H1 (cell line): ENCODE measurements at regions of chr19 and their contacts with region 1.

Region 1: GRCh38 chr19:44890366-44891015 is 563 bp upstream of the TOMM40 start:
- DNase-seq: peak; percentile 99
- H3K4me3 ChIP-seq: peak overlapping the region; percentile 28 to 58 (median 48); a peak in 7 of 8 replicates
- H3K27ac ChIP-seq: peak overlapping the region; percentile 74; the same call in 1 of the 2 replicates
- H3K4me1 ChIP-seq: peaks cover 5 to 8% (median 7%) of the 10 kb centered on the region in 4 experiments
- H3K27me3 ChIP-seq: no peaks in the 10 kb centered on the region
- CTCF ChIP-seq: no peak
- EP300 ChIP-seq: no peak
- POLR2A ChIP-seq: peak; percentile 83 to 92
- RAD21 ChIP-seq: no peak

Region 2: GRCh38 chr19:44737238-44738071 is 153.0 kb before region 1 on chr19:
- CTCF ChIA-PET with region 1: no interaction called
- POLR2A ChIA-PET with region 1: no interaction called
- DNase-seq: no peak
- H3K4me3 ChIP-seq: no peak overlapping the region
- H3K27ac ChIP-seq: no peak overlapping the region
- H3K4me1 ChIP-seq: peaks cover 0 to 4% (median 2%) of the 10 kb centered on the region in 4 experiments; a peak in 4 of 7 replicates
- H3K27me3 ChIP-seq: peaks cover 0 to 3% (median 0%) of the 10 kb centered on the region in 4 experiments; a peak in 1 of 7 replicates
- CTCF ChIP-seq: no peak
- EP300 ChIP-seq: no peak
- POLR2A ChIP-seq: no peak
- RAD21 ChIP-seq: no peak

Region 3: DNA sequence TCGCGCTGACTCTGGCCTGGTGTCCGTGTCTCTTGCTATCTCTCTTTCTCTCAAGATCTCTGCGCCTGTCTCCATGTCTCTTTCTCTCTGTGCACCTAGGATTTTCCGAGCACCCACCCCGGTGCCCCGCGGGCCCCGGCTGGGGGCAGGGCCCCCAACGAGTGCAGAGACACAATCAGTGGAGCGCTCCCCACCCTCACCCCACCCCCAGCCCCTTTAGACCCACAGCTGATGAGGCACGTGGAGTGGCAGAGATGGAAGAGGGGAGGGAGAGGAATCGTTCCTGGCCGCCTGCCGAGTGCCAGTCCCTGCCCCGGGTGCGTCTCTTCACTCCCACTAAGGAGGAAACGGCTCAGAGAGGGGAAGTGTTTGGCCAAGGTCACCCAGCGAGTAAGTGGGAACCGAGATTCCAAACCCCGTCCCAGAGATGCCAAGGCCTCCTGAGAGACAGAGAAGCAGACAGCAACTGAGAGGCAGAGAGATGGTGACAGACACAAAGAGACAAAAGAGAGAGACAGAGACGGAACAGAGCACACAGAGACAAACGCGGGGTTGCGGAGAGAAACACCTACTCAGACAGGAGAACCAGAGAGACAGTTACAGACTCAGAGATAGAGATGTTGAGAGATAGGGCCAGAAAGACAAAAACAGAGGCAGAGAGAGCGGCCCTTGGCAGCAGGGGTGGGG is 142.6 kb before region 1 on chr19:
- CTCF ChIA-PET with region 1: no interaction called
- POLR2A ChIA-PET with region 1: no interaction called
- DNase-seq: peak in 1 of 2 experiments; percentile 59
- H3K4me3 ChIP-seq: peak overlapping the region; percentile 43 to 65 (median 52)
- H3K27ac ChIP-seq: no peak overlapping the region
- H3K4me1 ChIP-seq: peaks cover 0 to 7% (median 4%) of the 10 kb centered on the region in 4 experiments; a peak in 4 of 7 replicates
- H3K27me3 ChIP-seq: peaks cover 22 to 68% (median 51%) of the 10 kb centered on the region in 4 experiments
- CTCF ChIP-seq: no peak
- EP300 ChIP-seq: no peak
- POLR2A ChIP-seq: no peak
- RAD21 ChIP-seq: no peak

Region 4: DNA sequence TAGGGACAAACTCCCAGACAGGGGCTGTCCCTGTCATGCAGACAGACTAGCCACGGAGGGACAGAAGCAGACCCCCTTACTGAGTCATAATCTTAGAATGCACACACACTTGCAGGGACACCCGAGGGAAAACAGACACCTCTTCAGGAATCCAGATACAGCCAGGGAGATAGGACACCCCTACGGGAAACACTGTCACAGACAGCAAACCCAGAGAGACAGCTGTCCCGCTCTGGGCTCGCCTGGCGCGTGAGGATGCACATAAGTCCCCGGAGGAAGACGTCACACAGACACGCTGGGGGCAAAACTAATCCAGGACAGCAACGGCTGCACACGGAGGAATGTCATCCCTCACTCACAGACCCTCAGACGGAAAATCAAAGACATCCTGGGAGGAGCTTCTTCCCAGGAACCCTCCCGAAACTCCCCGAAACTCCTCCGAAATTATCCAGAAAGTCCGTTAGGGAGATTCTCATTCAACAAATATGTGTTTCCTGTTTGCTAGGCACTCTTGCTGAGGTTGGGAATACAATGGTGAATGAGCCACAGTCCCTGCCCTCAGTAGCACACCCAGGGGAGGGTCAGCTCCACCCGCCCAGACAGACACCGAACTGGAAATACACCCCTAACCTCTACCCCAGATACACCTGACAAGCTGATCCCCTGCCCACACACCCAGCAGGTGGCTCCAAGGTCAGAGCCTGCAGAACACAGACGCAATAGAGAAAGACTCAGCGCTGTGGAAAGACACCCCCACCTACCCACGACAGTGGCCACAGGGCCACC is 14.6 kb before region 1 on chr19:
- CTCF ChIA-PET with region 1: no interaction called
- POLR2A ChIA-PET with region 1: interaction called, 109 read pairs
- DNase-seq: no peak
- H3K4me3 ChIP-seq: no peak overlapping the region
- H3K27ac ChIP-seq: no peak overlapping the region
- H3K4me1 ChIP-seq: peaks cover 0 to 20% (median 3%) of the 10 kb centered on the region in 4 experiments; a peak in 5 of 7 replicates
- H3K27me3 ChIP-seq: no peaks in the 10 kb centered on the region
- CTCF ChIP-seq: no peak
- EP300 ChIP-seq: no peak
- POLR2A ChIP-seq: no peak
- RAD21 ChIP-seq: no peak